ENCODE measurements at regions of chr1 and their contacts with region 1.

Region 1: GRCh38 chr1:87435484-87435883 is 106.8 kb downstream of the LMO4 start:
- DNase-seq: peak; percentile 36
- H3K4me3 Mint-ChIP-seq: no peak overlapping the region
- H3K27ac Mint-ChIP-seq: no peak overlapping the region
- H3K4me1 Mint-ChIP-seq: peaks cover 10% of the 10 kb centered on the region
- H3K27me3 Mint-ChIP-seq: peaks cover 6% of the 10 kb centered on the region

Region 2: DNA sequence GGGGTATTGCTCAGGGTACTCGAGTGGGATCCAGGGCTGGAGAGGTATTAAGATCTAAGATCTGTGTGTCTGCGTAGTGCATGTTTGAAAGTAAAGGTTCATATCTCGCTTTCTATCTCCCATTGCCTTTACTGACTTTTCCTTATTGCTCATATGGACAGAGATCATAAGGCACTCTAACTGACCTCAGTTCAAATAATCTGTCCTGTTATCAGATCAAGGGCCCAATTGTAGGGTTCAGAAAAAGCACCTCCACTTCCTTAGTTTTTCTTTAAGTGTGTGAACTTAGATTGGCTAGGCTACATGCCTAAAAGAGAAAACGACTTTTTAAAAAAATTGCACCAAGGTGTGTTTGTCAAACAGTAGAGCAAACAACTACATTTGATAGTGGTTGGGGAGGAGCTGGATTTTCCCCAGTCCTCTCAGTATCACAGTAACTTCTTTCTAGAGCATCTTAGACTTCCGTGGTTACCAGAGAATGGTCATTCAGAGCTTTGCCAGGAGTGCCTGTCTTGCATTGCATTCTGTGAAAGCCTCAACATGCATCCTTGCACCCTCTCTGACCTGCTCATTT is 49.2 kb before region 1 on chr1:
- CTCF ChIA-PET with region 1: no interaction called
- POLR2A ChIA-PET with region 1: no interaction called
- intact Hi-C with region 1: no loop called
- DNase-seq: no peak
- H3K4me3 Mint-ChIP-seq: no peak overlapping the region
- H3K27ac Mint-ChIP-seq: no peak overlapping the region
- H3K4me1 Mint-ChIP-seq: no peaks in the 10 kb centered on the region
- H3K27me3 Mint-ChIP-seq: peaks cover 3% of the 10 kb centered on the region

Region 3: DNA sequence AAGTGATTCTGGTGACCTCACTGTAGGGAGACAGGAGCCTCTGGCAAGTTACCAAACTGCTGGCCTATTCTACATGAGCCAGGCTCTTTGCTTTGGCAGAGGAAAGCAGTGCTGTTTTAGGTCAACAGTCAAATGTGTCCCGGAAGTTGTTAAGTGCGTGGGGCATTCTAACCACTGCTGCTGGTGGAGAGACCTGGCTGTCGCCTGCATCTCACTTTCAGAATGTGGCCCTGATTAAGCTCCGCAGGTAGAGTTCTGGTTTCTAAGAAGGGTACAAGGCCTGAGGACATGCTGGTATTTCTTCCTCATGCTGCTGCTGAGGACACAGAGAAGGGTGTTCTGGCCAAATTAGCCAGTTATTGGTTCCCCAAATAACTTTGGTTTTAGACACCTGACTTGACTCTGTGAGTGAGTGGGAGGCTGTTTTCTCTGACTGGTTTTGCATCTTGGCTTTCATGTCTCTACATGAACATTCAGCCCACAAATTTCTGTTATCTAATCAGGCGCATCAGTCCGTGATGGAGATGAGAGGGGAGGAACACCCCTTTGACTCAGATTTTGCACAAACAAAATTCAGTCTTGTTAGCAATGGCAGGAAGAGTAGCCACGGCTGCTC is 14.0 kb after region 1 on chr1:
- CTCF ChIA-PET with region 1: no interaction called
- POLR2A ChIA-PET with region 1: no interaction called
- intact Hi-C with region 1: loop called (anchors 1 kb)
- DNase-seq: peak; percentile 80
- H3K4me3 Mint-ChIP-seq: peak overlapping the region; percentile 34
- H3K27ac Mint-ChIP-seq: peak overlapping the region; percentile 78
- H3K4me1 Mint-ChIP-seq: peaks cover 33% of the 10 kb centered on the region
- H3K27me3 Mint-ChIP-seq: no peaks in the 10 kb centered on the region